PC-9 (cell line): ENCODE measurements at regions of chr11 and their contacts with region 1.

Region 1: GRCh38 chr11:10641912-10642697 is 51.5 kb downstream of the IRAG1 start:
- DNase-seq: no peak
- H3K4me3 ChIP-seq: no peak overlapping the region
- H3K27ac ChIP-seq: no peak overlapping the region
- H3K4me1 ChIP-seq: peaks cover under 1% of the 10 kb centered on the region; the same call in 1 of the 2 replicates
- H3K27me3 ChIP-seq: no peaks in the 10 kb centered on the region
- CTCF ChIP-seq: no peak

Region 2: DNA sequence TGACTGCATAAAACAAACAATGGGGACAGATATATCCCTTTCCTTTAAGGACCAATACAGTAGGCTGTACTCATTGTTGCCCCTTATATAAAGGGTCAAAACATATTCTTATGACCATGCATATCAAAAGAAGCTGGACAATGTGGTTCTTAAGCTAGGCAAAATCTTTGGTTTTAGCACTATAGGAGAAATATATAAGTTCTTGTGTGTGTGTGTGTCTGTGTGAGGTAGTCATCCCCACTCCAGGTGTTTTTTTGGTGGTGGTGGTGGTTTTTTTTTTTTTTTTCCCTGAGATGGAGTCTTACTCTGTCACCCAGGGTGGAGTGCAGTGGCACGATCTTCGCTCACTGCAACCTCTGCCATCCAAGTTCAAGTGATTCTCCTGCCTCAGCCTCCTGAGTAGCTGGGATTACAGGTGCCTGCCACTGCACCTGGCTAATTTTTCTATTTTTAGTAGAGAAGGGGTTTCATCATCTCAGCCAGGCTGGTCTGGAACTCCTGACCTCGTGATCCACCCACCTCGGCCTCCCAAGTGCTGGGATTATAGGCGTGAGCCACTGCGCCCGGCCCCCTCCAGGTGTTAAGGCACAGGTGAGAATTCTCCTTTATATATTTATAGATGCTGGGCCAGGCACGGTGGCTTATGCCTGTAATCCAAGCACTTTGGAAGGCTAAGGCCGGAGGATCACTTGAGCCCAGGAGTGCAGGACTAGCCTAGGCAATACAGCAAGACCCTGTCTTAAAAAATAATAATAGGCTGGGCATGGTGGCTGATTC is 1193.3 kb before region 1 on chr11:
- CTCF ChIA-PET with region 1: interaction called, 10 read pairs
- POLR2A ChIA-PET with region 1: no interaction called
- intact Hi-C with region 1: no loop called
- DNase-seq: no peak
- H3K4me3 ChIP-seq: no peak overlapping the region
- H3K27ac ChIP-seq: no peak overlapping the region
- H3K4me1 ChIP-seq: no peaks in the 10 kb centered on the region
- H3K27me3 ChIP-seq: no peaks in the 10 kb centered on the region
- CTCF ChIP-seq: no peak

Region 3: GRCh38 chr11:10669258-10670033 is 27.3 kb after region 1 on chr11:
- CTCF ChIA-PET with region 1: no interaction called
- POLR2A ChIA-PET with region 1: no interaction called
- intact Hi-C with region 1: no loop called
- DNase-seq: peak in 1 of 2 experiments; percentile 45
- H3K4me3 ChIP-seq: no peak overlapping the region
- H3K27ac ChIP-seq: 0 out of 2 replicates have a peak overlapping the region, but pooled peaks have one; percentile 23
- H3K4me1 ChIP-seq: peaks cover 32% of the 10 kb centered on the region
- H3K27me3 ChIP-seq: no peaks in the 10 kb centered on the region
- CTCF ChIP-seq: no peak

Region 4: GRCh38 chr11:10975287-10975721 is 333.2 kb after region 1 on chr11:
- CTCF ChIA-PET with region 1: no interaction called
- POLR2A ChIA-PET with region 1: no interaction called
- intact Hi-C with region 1: no loop called
- DNase-seq: no peak
- H3K4me3 ChIP-seq: no peak overlapping the region
- H3K27ac ChIP-seq: no peak overlapping the region
- H3K4me1 ChIP-seq: no peaks in the 10 kb centered on the region
- H3K27me3 ChIP-seq: no peaks in the 10 kb centered on the region
- CTCF ChIP-seq: no peak